ENCODE measurements at regions of chr11 and their contacts with region 1.

Region 1: DNA sequence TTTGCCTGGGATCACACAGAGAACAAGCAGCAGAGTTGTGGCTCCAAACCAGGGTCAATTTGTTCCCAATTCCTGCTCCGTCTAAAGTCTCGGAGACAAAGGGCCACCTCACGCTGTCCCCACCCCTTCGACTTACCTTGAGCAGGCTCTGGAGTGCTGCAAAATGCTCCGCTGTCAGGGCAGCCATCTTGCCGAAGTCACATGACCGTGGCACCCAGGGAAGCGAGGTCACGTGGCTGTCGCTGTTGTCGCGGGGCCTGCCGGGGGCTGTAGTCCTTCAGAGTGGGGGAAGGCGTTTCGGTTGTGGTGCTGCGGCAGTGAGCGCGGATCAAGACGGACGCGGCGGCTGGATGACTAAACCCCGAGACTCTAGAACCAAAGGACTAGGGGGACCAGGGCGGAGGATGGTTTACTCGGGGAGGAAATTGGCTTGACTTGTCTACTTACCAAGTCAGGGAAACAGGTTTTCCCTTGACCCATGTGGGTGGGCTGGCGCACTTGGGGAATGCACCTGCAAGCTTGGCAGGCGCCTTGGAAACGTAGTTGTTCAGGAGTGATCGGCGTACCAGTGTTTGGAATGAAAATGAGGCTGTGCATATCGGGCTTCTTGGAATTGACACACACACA is at the start of gene COMMD9:
- DNase-seq: peak; percentile 97
- ATAC-seq: peak; percentile 99
- H3K4me3 Mint-ChIP-seq: peak within 1 kb of the TSS; percentile 92
- H3K27ac Mint-ChIP-seq: peak within 1 kb of the TSS; percentile 89
- H3K4me1 Mint-ChIP-seq: peaks cover 28% of the 10 kb centered on the region
- H3K27me3 Mint-ChIP-seq: peaks cover 3% of the 10 kb centered on the region
- total RNA-seq, gene COMMD9: 44.6 to 47.5 TPM

Region 2: GRCh38 chr11:36258730-36259360 is 30.5 kb before region 1 on chr11:
- CTCF ChIA-PET with region 1: no interaction called
- POLR2A ChIA-PET with region 1: no interaction called
- DNase-seq: peak; percentile 27
- ATAC-seq: no peak
- H3K4me3 Mint-ChIP-seq: no peak overlapping the region
- H3K27ac Mint-ChIP-seq: no peak overlapping the region
- H3K4me1 Mint-ChIP-seq: no peaks in the 10 kb centered on the region
- H3K27me3 Mint-ChIP-seq: peaks cover 6% of the 10 kb centered on the region

Region 3: DNA sequence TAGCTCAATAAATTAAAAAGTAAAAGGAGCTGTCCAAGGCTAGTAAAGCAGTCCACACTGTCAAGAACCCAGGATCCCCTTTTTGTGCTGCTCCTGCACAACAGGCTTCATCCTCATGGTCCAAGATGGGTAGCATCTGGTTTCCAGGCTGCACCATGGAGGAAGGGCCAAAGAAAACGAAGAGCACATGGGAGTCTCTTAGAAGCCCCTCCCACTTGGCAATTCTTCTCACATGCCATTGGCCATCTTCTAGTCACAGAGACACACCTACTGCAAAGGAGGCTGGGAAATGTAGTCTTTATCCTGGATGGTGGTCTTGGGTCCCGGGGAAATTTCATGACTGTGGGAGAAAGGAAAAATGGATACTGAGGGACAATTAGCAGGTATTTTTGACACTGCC is 44.6 kb after region 1 on chr11:
- CTCF ChIA-PET with region 1: no interaction called
- POLR2A ChIA-PET with region 1: no interaction called
- DNase-seq: no peak
- ATAC-seq: no peak
- H3K4me3 Mint-ChIP-seq: no peak overlapping the region
- H3K27ac Mint-ChIP-seq: no peak overlapping the region
- H3K4me1 Mint-ChIP-seq: no peaks in the 10 kb centered on the region
- H3K27me3 Mint-ChIP-seq: peaks cover 35% of the 10 kb centered on the region

Region 4: GRCh38 chr11:36354221-36355003 is 65.1 kb after region 1 on chr11:
- CTCF ChIA-PET with region 1: interaction called, 22 read pairs
- POLR2A ChIA-PET with region 1: no interaction called
- DNase-seq: no peak
- ATAC-seq: peak; percentile 29
- H3K4me3 Mint-ChIP-seq: no peak overlapping the region
- H3K27ac Mint-ChIP-seq: no peak overlapping the region
- H3K4me1 Mint-ChIP-seq: peaks cover 43% of the 10 kb centered on the region
- H3K27me3 Mint-ChIP-seq: peaks cover 24% of the 10 kb centered on the region

Region 5: GRCh38 chr11:36485298-36486002 is 196.1 kb after region 1 on chr11:
- CTCF ChIA-PET with region 1: interaction called, 201 read pairs
- POLR2A ChIA-PET with region 1: no interaction called
- DNase-seq: no peak
- ATAC-seq: no peak
- H3K4me3 Mint-ChIP-seq: no peak overlapping the region
- H3K27ac Mint-ChIP-seq: no peak overlapping the region
- H3K4me1 Mint-ChIP-seq: peaks cover 32% of the 10 kb centered on the region
- H3K27me3 Mint-ChIP-seq: no peaks in the 10 kb centered on the region

Region 6: DNA sequence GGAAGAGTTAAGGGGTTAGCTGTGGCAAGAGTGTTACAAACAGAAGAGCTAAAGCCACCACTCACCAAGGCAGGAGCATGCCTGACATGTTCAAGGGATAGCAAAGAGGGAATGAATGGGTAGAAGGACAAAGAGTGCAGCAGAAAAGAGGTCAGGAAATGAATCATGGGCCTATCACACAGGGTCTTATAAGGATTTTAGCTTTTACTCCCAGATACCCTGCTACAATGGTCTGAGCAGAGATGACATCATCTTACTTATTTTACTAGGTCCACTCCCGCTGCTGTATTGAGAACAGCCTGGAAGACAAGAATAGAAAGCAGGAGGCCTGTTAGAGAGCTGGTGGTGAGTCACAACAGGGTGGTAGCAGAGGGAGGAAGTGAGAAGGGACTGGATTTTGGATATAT is 211.0 kb after region 1 on chr11:
- CTCF ChIA-PET with region 1: interaction called, 178 read pairs
- POLR2A ChIA-PET with region 1: interaction called, 4 read pairs
- DNase-seq: no peak
- ATAC-seq: no peak
- H3K4me3 Mint-ChIP-seq: no peak overlapping the region
- H3K27ac Mint-ChIP-seq: no peak overlapping the region
- H3K4me1 Mint-ChIP-seq: peaks cover 26% of the 10 kb centered on the region
- H3K27me3 Mint-ChIP-seq: no peaks in the 10 kb centered on the region

Region 7: DNA sequence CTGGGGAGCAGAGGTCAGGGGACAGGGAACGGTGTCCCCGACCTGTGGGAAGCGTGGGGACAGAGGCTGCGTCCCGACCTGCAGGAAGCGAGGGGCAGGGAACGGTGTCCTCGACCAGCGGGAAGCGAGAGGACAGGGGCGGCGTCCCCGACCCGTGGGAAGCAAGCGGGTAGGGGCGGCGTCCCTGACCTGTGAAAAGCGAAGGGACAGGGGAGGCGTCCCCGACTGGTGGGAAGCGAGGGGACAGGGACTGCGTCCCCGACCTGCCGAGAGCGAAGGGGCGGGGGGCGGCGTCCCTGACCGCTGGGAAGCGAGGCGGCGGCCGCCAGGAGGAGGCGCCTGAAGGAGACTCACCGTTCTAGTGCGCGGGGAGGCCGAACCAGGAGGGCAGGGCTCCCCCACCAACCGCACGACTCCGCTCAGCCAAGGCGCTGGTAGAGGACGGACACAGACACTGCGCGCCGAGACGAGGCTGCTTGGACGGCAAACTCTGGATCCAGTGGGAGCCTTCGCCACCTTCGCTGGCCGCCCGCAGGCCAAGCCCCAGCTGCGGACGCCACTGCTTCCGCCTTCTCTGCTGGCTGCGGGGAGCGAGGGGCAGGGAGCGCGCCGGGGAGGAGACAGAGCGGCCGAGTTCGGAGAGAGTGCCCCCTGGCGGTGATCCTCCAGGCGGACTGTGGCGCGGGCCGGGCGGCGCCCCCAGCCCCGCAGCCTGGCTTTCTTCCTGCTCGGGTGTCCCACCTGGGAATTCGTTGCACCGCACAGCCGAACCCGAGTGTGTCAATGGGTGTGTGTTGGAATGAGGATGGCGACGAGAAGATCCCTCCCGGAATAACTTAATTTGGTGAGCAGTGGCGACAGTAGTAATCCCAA is 220.6 kb after region 1 on chr11 and contains the start of gene TRAF6:
- CTCF ChIA-PET with region 1: interaction called, 23 read pairs
- POLR2A ChIA-PET with region 1: no interaction called
- DNase-seq: peak; percentile 91
- ATAC-seq: peak; percentile 97
- H3K4me3 Mint-ChIP-seq: peak within 1 kb of the TSS; percentile 98
- H3K27ac Mint-ChIP-seq: peak within 1 kb of the TSS; percentile 92
- H3K4me1 Mint-ChIP-seq: peaks cover 32% of the 10 kb centered on the region
- H3K27me3 Mint-ChIP-seq: peaks cover 9% of the 10 kb centered on the region
- total RNA-seq, gene TRAF6: 8.8 to 9.1 TPM

Measured in activated CD8-positive, alpha-beta T cell treated with anti-CD3 and anti-CD28 coated beads, Interleukin-2, amount 10 ng/mL, durations not matched to agents 7 days and 5 days (primary cell).